ENCODE measurements at regions of chr1 and their contacts with region 1.

Region 1: DNA sequence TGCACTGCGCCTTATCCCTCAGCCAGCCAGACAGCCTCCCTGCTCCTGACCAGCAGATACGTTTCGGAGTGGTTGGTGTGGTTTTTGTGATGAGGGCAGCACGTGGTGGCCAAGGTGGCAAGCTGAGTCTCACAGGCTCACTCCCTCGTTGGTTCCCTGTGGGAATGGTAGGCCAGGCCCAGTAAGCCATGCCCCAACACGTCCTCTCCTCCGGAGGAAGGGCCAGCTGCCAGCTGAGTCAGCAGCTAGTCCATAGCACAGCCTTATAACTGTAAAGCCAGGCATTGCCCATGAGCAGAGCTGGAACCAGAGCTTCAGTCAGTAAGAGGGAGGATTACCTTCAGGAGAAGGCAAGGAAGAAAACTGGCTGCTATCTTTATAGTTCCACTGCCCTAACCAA is 29.5 kb downstream of the SZRD1 start:
- DNase-seq: peak in 1 of 2 donors; percentile 29
- ATAC-seq: peak in 1 of 8 donors; percentile 35
- H3K4me3 ChIP-seq: no peak overlapping the region
- H3K27ac ChIP-seq: peak overlapping the region in 4 of 10 donors; percentile 26 to 66 (median 36)
- H3K4me1 ChIP-seq: peaks cover 15 to 46% (median 35%) of the 10 kb centered on the region in 9 donors
- H3K27me3 ChIP-seq: no peaks in the 10 kb centered on the region
- CTCF ChIP-seq: no peak

Region 2: GRCh38 chr1:16334655-16335340 is 61.8 kb before region 1 on chr1:
- intact Hi-C with region 1: no loop called
- DNase-seq: no peak
- ATAC-seq: no peak
- H3K4me3 ChIP-seq: no peak overlapping the region
- H3K27ac ChIP-seq: no peak overlapping the region
- H3K4me1 ChIP-seq: peaks cover 0 to 50% (median 13%) of the 10 kb centered on the region in 9 donors
- H3K27me3 ChIP-seq: no peaks in the 10 kb centered on the region
- CTCF ChIP-seq: no peak

Region 3: GRCh38 chr1:16456161-16456560 is 59.6 kb after region 1 on chr1:
- intact Hi-C with region 1: loop called in 1 of 10 experiments (anchors 2 kb)
- DNase-seq: no peak
- ATAC-seq: no peak
- H3K4me3 ChIP-seq: no peak overlapping the region
- H3K27ac ChIP-seq: no peak overlapping the region
- H3K4me1 ChIP-seq: peaks cover 0 to 36% (median 12%) of the 10 kb centered on the region in 9 donors
- H3K27me3 ChIP-seq: no peaks in the 10 kb centered on the region
- CTCF ChIP-seq: no peak